ENCODE measurements at regions of chr3 and their contacts with region 1.

Region 1: DNA sequence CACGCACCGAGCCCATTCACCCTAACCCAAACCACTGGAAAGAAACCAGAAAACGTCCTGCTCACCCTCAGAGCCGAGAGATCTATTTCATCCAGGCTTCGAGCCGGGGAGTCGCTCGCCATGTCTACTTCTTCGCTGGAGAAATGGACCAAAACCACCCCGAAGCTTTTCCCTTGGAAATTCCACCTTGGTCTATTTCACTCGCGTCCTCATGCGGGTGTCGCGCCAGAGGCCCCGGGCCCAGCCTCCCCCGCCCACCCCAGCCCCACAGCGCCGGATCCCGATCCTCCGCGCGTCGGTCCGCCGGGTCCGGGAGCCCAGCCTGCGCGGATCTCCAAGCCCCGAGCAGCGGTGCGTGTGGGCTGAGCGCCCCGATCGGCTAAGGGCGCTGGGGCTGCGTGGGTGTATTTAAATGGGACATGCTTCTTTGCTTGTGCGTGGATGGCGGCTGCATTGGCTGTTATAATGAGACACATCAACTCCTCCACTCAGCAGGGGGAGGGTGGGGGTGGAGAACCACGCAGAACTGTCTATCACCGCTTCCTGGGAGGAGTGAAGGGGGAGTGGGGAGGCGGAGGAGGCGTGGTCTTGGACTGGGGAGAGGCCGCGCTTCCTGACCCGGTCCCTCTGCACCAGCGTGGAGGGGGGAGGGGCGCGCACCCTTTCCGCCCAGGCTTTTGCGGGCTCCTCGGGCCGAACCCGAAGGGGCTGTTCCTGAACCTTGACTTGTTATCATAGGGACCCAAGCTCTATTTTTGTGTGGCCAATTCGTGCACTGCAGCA is at the start of gene TNIK:
- DNase-seq: peak; percentile 96 to 98 (median 96)
- ATAC-seq: peak; percentile 89
- H3K4me3 ChIP-seq: peak within 1 kb of the TSS; percentile 57
- H3K27ac ChIP-seq: peak within 1 kb of the TSS; percentile 84
- H3K4me1 ChIP-seq: peaks cover 12 to 33% of the 10 kb centered on the region in 2 experiments
- H3K27me3 ChIP-seq: no peaks in the 10 kb centered on the region
- CTCF ChIP-seq: no peak; a peak in 2 of 6 replicates
- EP300 ChIP-seq: peak; percentile 29; the same call in 1 of the 2 replicates
- POLR2A ChIP-seq: peak; percentile 75
- RAD21 ChIP-seq: peak in 1 of 2 experiments; percentile 8; a peak in 2 of 4 replicates
- polyA plus RNA-seq, gene TNIK: 6.6 to 6.8 TPM

Region 2: DNA sequence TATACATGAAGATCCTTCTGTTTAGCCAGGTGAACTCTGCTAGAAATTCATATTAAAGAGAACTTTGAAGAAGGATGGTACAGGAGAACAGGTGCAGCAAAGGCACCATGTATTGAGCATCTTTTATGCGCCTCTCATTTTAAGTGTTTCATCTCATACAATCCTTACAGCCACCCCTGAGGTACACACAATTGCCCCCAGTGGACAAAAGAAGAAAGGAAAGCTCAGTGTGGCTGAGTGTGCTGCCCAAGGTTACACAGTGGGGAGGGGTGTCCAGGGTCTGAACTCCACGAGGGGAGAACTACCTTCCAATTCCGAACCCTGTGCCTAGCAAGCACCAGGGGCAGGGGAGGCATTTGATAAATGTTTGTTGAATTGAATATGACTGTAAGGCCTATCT is 1895.2 kb before region 1 on chr3:
- CTCF ChIA-PET with region 1: no interaction called
- POLR2A ChIA-PET with region 1: no interaction called
- in situ Hi-C with region 1: no loop called
- intact Hi-C with region 1: no loop called
- DNase-seq: peak in 3 of 4 experiments; percentile 12 to 26 (median 21)
- ATAC-seq: peak; percentile 83
- H3K4me3 ChIP-seq: no peak overlapping the region
- H3K27ac ChIP-seq: no peak overlapping the region
- H3K4me1 ChIP-seq: no peaks in the 10 kb centered on the region
- H3K27me3 ChIP-seq: no peaks in the 10 kb centered on the region
- CTCF ChIP-seq: peak; percentile 12 to 38 (median 23); a peak in 4 of 6 replicates
- EP300 ChIP-seq: no peak
- POLR2A ChIP-seq: no peak
- RAD21 ChIP-seq: no peak

Region 3: DNA sequence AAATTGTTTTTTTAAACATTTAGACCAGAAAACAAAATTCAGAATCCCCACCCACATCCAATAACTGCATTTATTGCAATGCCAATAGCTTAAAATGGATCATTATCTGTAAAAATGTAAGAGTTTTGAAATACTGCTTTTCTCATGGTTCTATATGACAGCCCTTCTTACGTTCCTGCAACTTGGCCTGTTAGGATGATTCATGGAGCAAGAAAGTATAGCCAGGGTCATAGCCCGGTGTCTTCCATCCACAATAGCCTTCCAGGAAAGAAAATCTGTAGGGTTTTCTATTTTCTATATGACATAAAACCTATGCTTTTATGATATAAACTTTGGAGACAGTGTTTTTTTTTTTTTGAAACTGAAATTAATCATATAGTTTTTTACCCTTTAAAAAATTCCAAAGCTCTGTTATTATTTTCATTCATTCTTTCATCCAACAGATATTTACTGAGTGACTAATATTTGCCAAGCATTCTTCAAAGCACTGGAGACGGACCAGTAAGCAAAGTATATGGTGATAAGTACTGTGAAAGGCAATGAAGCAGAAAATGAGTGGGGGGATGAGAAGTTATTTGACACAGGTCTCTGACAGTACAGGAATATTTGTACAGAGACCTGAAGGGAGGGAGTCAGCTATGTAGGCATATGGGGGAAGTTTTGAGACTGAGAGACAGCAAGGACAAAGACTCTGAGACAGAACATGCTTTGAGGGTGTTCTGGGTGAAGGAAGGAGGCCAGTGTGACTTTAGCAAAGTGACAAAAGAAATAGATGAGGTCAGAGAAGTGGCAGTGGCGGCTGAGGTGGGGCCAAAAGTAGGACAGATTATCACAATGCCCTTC is 404.6 kb before region 1 on chr3:
- CTCF ChIA-PET with region 1: no interaction called
- POLR2A ChIA-PET with region 1: no interaction called
- in situ Hi-C with region 1: no loop called
- intact Hi-C with region 1: no loop called
- DNase-seq: no peak
- ATAC-seq: no peak
- H3K4me3 ChIP-seq: no peak overlapping the region
- H3K27ac ChIP-seq: no peak overlapping the region
- H3K4me1 ChIP-seq: 0 out of 5 replicates have a peak, but pooled peaks cover 0 to 2% of the 10 kb centered on the region in 2 experiments
- H3K27me3 ChIP-seq: no peaks in the 10 kb centered on the region; a peak in 1 of 5 replicates
- CTCF ChIP-seq: no peak
- EP300 ChIP-seq: no peak
- POLR2A ChIP-seq: no peak
- RAD21 ChIP-seq: no peak

Region 4: GRCh38 chr3:171187706-171188290 is 272.3 kb before region 1 on chr3:
- CTCF ChIA-PET with region 1: no interaction called
- POLR2A ChIA-PET with region 1: no interaction called
- in situ Hi-C with region 1: no loop called
- intact Hi-C with region 1: loop called (anchors 5 kb)
- DNase-seq: peak; percentile 32 to 63 (median 46)
- ATAC-seq: peak; percentile 62
- H3K4me3 ChIP-seq: no peak overlapping the region
- H3K27ac ChIP-seq: no peak overlapping the region
- H3K4me1 ChIP-seq: peaks cover 4 to 35% of the 10 kb centered on the region in 2 experiments
- H3K27me3 ChIP-seq: no peaks in the 10 kb centered on the region
- CTCF ChIP-seq: peak; percentile 67 to 71 (median 70)
- EP300 ChIP-seq: no peak
- POLR2A ChIP-seq: no peak
- RAD21 ChIP-seq: peak; percentile 67 to 81

Region 5: DNA sequence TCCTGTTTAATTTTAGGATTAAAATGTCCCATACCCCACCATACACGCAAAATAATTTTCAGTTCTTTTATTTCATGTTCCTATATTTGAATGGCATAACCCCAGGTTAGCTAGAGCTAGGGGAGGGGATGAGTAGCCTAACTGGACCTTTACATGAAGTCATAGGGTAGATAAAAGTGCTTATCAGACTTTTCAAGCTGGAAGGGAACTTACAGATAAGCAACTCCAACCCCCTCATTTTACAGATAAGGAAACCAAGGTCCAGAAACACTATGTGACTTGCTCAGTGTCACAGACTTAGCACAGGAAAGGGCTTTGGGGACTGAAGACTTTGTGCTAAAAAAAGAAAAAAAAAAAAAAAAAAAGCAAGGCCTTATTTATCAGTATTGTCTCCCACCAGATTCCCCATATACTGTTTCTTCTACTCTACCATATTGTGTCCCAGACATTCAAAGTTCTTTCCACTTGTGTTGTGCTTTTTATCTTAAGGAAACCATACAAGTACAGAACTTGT is 10.6 kb after region 1 on chr3:
- CTCF ChIA-PET with region 1: no interaction called
- POLR2A ChIA-PET with region 1: interaction called, 12 read pairs
- in situ Hi-C with region 1: no loop called
- intact Hi-C with region 1: no loop called
- DNase-seq: peak; percentile 83 to 93 (median 84)
- ATAC-seq: peak; percentile 85
- H3K4me3 ChIP-seq: no peak overlapping the region
- H3K27ac ChIP-seq: peak overlapping the region; percentile 90
- H3K4me1 ChIP-seq: peaks cover 26 to 54% of the 10 kb centered on the region in 2 experiments
- H3K27me3 ChIP-seq: no peaks in the 10 kb centered on the region
- CTCF ChIP-seq: no peak
- EP300 ChIP-seq: peak; percentile 100
- POLR2A ChIP-seq: peak; percentile 35; the same call in 1 of the 2 replicates
- RAD21 ChIP-seq: no peak; a peak in 1 of 4 replicates

Region 6: DNA sequence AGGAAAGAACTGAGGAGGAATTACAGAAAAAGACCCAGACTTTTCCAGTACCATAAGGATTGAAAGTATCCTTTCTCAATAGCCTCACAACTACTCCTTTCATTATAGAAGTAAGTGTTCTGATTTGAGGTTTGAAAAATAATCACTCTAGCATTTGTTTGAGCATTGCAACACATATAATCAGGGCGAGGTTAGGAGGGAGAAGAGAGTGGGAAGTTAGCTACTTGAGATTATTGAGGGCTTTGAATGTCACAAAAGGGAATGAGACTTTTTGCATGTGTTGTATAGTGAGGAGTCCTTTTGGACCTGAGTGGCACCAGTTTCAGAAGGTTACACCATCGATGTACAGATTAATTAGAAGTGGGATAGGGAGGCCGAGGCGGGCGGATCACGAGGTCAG is 65.3 kb after region 1 on chr3:
- CTCF ChIA-PET with region 1: no interaction called
- POLR2A ChIA-PET with region 1: no interaction called
- in situ Hi-C with region 1: no loop called
- intact Hi-C with region 1: loop called (anchors 2 kb)
- DNase-seq: no peak
- ATAC-seq: no peak
- H3K4me3 ChIP-seq: no peak overlapping the region
- H3K27ac ChIP-seq: peak overlapping the region; percentile 72
- H3K4me1 ChIP-seq: peaks cover 10 to 23% of the 10 kb centered on the region in 2 experiments
- H3K27me3 ChIP-seq: no peaks in the 10 kb centered on the region
- CTCF ChIP-seq: no peak
- EP300 ChIP-seq: no peak
- POLR2A ChIP-seq: no peak
- RAD21 ChIP-seq: no peak

Region 7: DNA sequence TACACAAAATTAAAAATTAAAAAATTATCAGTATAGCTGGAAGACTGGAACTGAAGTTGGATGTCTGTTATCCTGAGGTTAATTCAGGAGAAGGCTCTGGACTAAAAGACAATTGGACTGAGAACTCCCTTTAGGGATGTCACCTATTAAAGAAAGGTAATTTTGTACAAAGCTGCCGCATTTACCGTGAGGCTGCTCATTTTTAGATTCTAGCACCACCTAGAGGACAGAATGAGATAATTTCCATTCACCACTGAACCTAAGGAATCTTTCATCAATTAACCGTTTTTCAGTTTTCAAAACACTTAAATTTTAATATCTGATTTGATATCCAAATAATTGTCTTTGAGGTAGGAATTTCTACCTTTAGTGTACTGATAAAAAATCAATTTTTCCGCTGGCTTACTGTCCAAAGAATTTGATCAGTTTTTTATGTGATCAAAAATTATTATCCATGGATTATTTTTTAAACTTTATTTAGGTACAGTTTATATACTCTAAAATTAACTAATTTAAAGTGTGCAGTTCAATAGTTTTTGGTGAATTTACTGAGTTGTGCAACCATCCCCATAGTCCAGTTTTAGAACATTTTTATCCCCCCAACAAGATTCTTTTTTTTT is 106.8 kb after region 1 on chr3:
- CTCF ChIA-PET with region 1: no interaction called
- POLR2A ChIA-PET with region 1: interaction called, 3 read pairs
- in situ Hi-C with region 1: no loop called
- intact Hi-C with region 1: loop called (anchors 5 kb)
- DNase-seq: peak; percentile 53 to 64 (median 62)
- ATAC-seq: peak; percentile 79
- H3K4me3 ChIP-seq: no peak overlapping the region
- H3K27ac ChIP-seq: no peak overlapping the region
- H3K4me1 ChIP-seq: no peaks in the 10 kb centered on the region
- H3K27me3 ChIP-seq: no peaks in the 10 kb centered on the region
- CTCF ChIP-seq: peak; percentile 58 to 91 (median 68); a peak in 5 of 6 replicates
- EP300 ChIP-seq: no peak
- POLR2A ChIP-seq: no peak
- RAD21 ChIP-seq: peak; percentile 93 to 97